ENCODE measurements at regions of chr9 and their contacts with region 1.

Region 1: GRCh38 chr9:89388084-89388867 is 70.0 kb downstream of the SECISBP2 start:
- DNase-seq: no peak
- H3K4me3 ChIP-seq: no peak overlapping the region
- H3K27ac ChIP-seq: peak overlapping the region in 2 of 3 donors; percentile 34 to 51
- H3K4me1 ChIP-seq: peaks cover 5 to 28% of the 10 kb centered on the region in 2 donors
- H3K27me3 ChIP-seq: no peaks in the 10 kb centered on the region
- CTCF ChIP-seq: no peak
- POLR2A ChIP-seq: no peak

Region 2: GRCh38 chr9:89442981-89443814 is 54.9 kb after region 1 on chr9:
- intact Hi-C with region 1: loop called (anchors 5 kb)
- DNase-seq: no peak
- H3K4me3 ChIP-seq: no peak overlapping the region
- H3K27ac ChIP-seq: no peak overlapping the region
- H3K4me1 ChIP-seq: peaks cover 22 to 42% of the 10 kb centered on the region in 2 donors
- H3K27me3 ChIP-seq: no peaks in the 10 kb centered on the region
- CTCF ChIP-seq: no peak
- POLR2A ChIP-seq: no peak

Region 3: GRCh38 chr9:89461265-89461664 is 73.0 kb after region 1 on chr9:
- intact Hi-C with region 1: no loop called
- DNase-seq: no peak
- H3K4me3 ChIP-seq: no peak overlapping the region
- H3K27ac ChIP-seq: no peak overlapping the region
- H3K4me1 ChIP-seq: peaks cover 0 to 3% of the 10 kb centered on the region in 2 donors
- H3K27me3 ChIP-seq: no peaks in the 10 kb centered on the region
- CTCF ChIP-seq: no peak
- POLR2A ChIP-seq: no peak

Region 4: GRCh38 chr9:89489548-89490530 is 101.6 kb after region 1 on chr9:
- intact Hi-C with region 1: no loop called
- DNase-seq: no peak
- H3K4me3 ChIP-seq: no peak overlapping the region
- H3K27ac ChIP-seq: no peak overlapping the region
- H3K4me1 ChIP-seq: peaks cover 4 to 17% of the 10 kb centered on the region in 2 donors
- H3K27me3 ChIP-seq: no peaks in the 10 kb centered on the region
- CTCF ChIP-seq: no peak
- POLR2A ChIP-seq: no peak

Region 5: GRCh38 chr9:89502038-89502601 is 113.8 kb after region 1 on chr9:
- intact Hi-C with region 1: no loop called
- DNase-seq: no peak
- H3K4me3 ChIP-seq: no peak overlapping the region
- H3K27ac ChIP-seq: no peak overlapping the region
- H3K4me1 ChIP-seq: peaks cover 20 to 30% of the 10 kb centered on the region in 2 donors
- H3K27me3 ChIP-seq: no peaks in the 10 kb centered on the region
- CTCF ChIP-seq: no peak
- POLR2A ChIP-seq: no peak